ENCODE measurements at regions of chr20 and their contacts with region 1.

Region 1: GRCh38 chr20:49915378-49916145 is at the start of gene SPATA2:
- DNase-seq: peak; percentile 95
- CTCF ChIP-seq: no peak

Region 2: GRCh38 chr20:49901588-49901987 is 14.0 kb before region 1 on chr20:
- CTCF ChIA-PET with region 1: interaction called, 8 read pairs
- POLR2A ChIA-PET with region 1: interaction called, 18 read pairs
- DNase-seq: no peak
- CTCF ChIP-seq: no peak

Region 3: GRCh38 chr20:49928401-49929141 is 13.0 kb after region 1 on chr20:
- CTCF ChIA-PET with region 1: interaction called, 13 read pairs
- POLR2A ChIA-PET with region 1: no interaction called
- DNase-seq: peak; percentile 78
- CTCF ChIP-seq: peak; percentile 89

Region 4: GRCh38 chr20:49936153-49937027 is 20.8 kb after region 1 on chr20 and contains the start of gene RNF114:
- CTCF ChIA-PET with region 1: interaction called, 9 read pairs
- POLR2A ChIA-PET with region 1: interaction called, 16 read pairs
- DNase-seq: peak; percentile 99
- CTCF ChIP-seq: no peak

Measured in GM10248 (cell line).